Gastrocnemius medialis (tissue), 4 donors: ENCODE measurements at regions of chr5 and their contacts with region 1.

Region 1: DNA sequence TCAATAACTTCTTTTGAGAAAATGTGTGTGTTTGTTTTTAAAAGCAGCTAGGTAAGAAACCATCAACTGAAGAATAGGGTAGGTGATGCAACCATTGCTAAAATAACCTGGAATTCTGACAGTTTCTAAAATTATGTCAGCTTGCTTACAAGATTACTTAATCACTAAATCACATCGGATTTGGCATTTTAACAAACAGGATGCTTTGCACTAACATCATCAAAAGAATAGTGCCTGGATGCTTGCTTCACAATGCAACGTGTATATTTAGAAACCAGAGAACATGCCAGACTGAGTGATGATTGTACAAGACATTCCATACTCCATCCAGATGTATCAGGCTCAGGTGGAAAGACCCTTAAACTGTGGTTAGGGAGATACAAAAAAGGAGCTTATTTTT is 43.9 kb downstream of the PAM start:
- DNase-seq: peak in 1 of 2 donors; percentile 21
- ATAC-seq: peak; percentile 76 to 77
- H3K4me3 ChIP-seq: peak overlapping the region in 1 of 4 donors; percentile 15
- H3K27ac ChIP-seq: peak overlapping the region; percentile 75 to 92 (median 82)
- H3K4me1 ChIP-seq: peaks cover 69 to 75% of the 10 kb centered on the region in 2 donors
- H3K27me3 ChIP-seq: no peaks in the 10 kb centered on the region
- CTCF ChIP-seq: no peak
- POLR2A ChIP-seq: no peak

Region 2: GRCh38 chr5:102819634-102820033 is 20.6 kb after region 1 on chr5:
- in situ Hi-C with region 1: no loop called
- intact Hi-C with region 1: loop called (anchors 2 kb)
- DNase-seq: no peak
- ATAC-seq: no peak
- H3K4me3 ChIP-seq: no peak overlapping the region
- H3K27ac ChIP-seq: no peak overlapping the region
- H3K4me1 ChIP-seq: peaks cover 49 to 55% of the 10 kb centered on the region in 2 donors
- H3K27me3 ChIP-seq: no peaks in the 10 kb centered on the region
- CTCF ChIP-seq: no peak
- POLR2A ChIP-seq: no peak

Region 3: DNA sequence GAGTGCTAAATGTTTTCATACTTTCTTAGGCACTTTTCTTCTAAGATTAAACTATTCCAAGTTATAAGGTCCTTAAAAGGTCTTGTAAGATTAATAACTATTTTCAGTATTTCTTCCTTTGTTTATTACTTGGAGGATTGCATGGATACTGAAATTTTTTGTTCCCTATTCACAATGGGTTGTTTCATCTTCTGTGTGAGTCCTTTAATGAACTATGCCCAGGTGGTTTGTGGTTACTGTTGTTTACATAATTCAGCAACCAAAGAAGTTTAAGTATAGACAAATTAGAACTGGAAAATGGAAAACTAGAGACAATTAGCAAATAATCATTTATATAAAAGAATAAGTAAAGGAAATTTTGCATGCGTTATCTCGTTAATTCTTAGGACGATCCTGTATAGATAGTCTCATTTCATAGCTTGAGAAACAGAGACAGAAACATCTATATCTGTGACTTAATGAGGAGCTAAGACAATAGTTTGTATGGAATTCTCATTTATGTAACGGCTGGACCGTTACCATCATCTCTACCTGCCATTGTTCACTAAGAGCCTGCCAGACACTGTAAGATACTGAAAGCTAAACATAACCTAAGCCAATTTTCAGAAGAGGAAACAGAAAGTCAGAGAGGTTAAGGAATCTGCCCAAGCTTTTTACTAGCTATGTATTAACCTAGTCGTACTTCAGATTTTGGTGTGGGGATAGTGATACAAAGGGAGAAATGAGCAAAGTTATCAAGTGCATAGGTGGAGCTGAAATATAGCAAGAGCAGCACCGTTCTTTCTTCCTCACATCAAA is 104.3 kb after region 1 on chr5:
- in situ Hi-C with region 1: no loop called
- intact Hi-C with region 1: no loop called
- DNase-seq: no peak
- ATAC-seq: no peak
- H3K4me3 ChIP-seq: no peak overlapping the region
- H3K27ac ChIP-seq: peak overlapping the region in 1 of 4 donors; percentile 29
- H3K4me1 ChIP-seq: peaks cover 0 to 12% of the 10 kb centered on the region in 2 donors
- H3K27me3 ChIP-seq: no peaks in the 10 kb centered on the region
- CTCF ChIP-seq: no peak
- POLR2A ChIP-seq: no peak